ENCODE measurements at regions of chr7 and their contacts with region 1.

Region 1: DNA sequence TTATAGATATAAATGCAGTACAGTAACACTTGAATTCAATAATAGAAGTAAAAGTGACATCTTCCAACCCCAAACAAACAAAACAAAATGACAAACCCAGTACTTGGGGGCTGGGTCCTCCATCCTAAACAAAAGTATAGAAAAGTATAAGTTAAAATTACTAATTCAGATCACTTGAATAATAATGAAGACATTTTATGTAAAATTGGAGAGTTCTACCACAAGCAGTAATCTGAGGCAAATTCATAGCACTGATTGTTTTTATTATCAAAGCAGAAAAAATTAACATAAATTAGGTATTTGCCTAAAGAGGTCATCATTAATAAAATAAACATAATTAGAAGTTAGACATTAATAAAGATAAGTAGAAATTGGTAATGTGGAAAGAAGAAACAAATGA is 81.5 kb downstream of the ITPRID1 start:
- DNase-seq: no peak
- H3K4me3 ChIP-seq: no peak overlapping the region
- H3K27ac ChIP-seq: no peak overlapping the region
- H3K4me1 ChIP-seq: no peaks in the 10 kb centered on the region
- H3K27me3 ChIP-seq: no peaks in the 10 kb centered on the region
- CTCF ChIP-seq: no peak

Region 2: DNA sequence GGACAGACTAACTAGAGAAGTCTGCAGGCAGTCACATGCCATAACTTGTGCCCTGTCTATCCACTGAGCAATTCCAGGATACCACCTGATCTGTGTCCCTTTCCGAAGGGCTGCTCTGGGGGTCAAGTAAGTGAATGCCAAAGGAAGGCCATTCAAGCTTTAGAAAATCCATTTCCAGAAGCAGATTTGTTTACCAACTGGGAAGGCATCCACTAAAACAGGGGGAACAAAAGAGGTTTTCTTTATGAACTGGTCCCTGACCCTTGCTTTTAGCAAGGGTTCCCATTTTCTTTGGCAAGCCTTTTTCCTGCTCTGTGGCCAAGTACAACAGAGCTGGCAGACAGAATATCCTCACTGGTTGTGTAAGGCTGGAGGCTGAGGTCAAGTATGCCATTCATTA is 45.0 kb before region 1 on chr7:
- CTCF ChIA-PET with region 1: no interaction called
- dilution Hi-C with region 1: no loop called
- in situ Hi-C with region 1: no loop called
- intact Hi-C with region 1: no loop called
- DNase-seq: no peak
- H3K4me3 ChIP-seq: no peak overlapping the region
- H3K27ac ChIP-seq: no peak overlapping the region
- H3K4me1 ChIP-seq: no peaks in the 10 kb centered on the region
- H3K27me3 ChIP-seq: peaks cover 4% of the 10 kb centered on the region
- CTCF ChIP-seq: no peak

Region 3: GRCh38 chr7:31569528-31569927 is 25.9 kb before region 1 on chr7:
- CTCF ChIA-PET with region 1: no interaction called
- dilution Hi-C with region 1: no loop called
- in situ Hi-C with region 1: no loop called
- intact Hi-C with region 1: loop called (anchors 1 kb)
- DNase-seq: no peak
- H3K4me3 ChIP-seq: no peak overlapping the region
- H3K27ac ChIP-seq: no peak overlapping the region
- H3K4me1 ChIP-seq: no peaks in the 10 kb centered on the region
- H3K27me3 ChIP-seq: peaks cover 3% of the 10 kb centered on the region
- CTCF ChIP-seq: no peak